GM18951 (cell line): ENCODE measurements at regions of chr22 and their contacts with region 1.

Region 1: DNA sequence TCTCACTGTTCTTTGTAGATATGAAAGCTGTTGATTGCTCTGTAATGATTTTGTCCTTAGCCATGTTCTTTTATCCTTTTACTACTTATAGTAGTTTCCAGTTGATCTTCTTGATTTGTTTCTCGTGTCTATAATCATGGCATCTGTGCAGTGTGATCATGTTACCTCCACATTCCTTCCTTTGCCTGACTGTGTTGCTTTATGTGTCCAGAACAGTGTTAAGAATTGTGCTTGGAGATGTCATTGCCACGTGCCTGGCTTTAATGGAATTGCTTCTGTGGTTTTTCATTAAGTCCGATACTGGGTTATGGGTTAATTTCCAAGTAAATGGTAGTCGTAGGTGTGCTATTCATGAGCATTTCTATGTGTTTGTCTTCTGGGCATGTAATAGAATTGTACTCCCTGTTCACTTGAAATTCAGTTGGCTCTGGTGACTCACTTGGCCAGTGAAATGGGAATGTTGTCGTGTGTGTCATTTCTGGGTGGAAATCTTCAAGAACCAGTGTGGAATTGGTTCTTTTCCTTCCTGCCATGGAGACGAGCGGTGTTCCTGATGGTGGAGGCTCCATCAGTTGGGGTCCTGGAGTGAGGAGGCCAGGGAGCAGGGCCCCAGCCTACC is 6.8 kb downstream of the GTSE1 start:
- POLR2A ChIP-seq: no peak

Region 2: DNA sequence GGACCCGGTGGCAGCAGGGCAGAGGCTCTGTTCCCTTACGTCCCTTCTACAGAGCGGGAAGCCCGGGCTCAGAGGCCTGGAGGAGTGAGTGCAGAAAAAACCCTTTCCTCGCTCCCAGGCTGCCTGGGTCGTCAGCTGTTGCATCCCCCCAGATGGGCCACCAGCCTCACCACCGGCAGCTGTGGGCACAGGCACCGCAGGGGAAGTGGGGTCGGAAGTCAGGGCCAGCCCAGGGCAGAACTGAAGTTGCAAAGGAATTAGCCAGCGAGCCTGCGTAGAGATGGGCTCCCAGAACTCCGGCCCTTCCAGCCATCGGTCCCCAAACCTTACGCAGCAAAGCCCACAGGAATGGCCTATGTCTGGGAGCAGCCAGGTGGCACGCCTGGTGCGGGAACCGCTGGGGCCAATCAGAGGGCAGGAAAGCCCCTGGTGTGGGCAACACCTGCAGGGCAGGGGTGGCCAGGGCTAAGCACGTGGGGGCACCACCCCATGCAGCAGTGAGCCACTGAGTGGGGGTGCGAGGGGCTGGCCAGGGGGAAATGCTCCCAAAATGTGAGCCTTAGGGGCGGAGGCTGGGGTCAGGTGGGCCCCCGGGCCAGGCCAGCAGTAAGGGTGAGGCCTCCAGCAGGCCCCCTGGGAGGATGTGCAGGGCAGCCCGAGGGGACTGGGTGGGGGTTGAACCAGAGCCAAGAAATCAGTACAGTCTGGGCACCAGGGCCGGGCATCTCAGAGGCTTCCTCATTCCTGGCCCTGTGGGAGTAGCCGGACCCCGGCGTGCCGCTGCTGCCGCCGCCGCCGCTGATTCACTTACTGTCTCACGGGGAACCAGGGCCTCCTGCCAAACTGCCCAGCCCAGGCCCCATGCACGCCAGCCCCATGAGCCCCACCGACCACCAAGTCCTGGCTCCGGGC is 384.7 kb before region 1 on chr22:
- in situ Hi-C with region 1: no loop called
- POLR2A ChIP-seq: no peak

Region 3: DNA sequence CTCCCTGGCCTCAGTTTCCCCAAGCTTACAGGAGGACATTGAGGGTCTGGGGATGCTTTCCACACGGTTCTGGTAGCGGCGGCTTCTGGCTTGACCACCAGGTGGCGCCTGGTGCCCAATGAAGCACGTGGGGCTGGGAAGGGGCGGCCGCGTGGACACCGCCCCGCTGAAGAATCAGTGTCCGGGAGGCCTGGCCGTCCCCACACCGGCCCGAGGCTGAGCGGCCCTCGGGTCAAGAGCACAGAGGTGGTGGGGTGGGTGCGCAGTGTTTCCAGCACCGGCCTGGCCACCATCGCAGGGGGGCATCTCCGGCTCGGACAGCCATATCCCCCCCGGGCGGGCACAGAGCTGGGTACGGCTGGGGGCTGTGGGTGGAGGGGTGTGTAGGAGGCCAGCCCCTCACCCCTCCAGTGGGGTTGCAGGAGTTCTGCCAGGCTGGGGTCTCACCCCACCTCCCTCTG is 180.9 kb before region 1 on chr22:
- in situ Hi-C with region 1: loop called (anchors 10 kb)
- POLR2A ChIP-seq: no peak

Region 4: GRCh38 chr22:46674367-46674781 is 370.9 kb after region 1 on chr22:
- in situ Hi-C with region 1: no loop called
- POLR2A ChIP-seq: no peak

Region 5: GRCh38 chr22:46931414-46931813 is 628.0 kb after region 1 on chr22:
- in situ Hi-C with region 1: no loop called
- POLR2A ChIP-seq: no peak